Head of caudate nucleus (tissue), 42 donors: ENCODE measurements at regions of chr6 and their contacts with region 1.

Region 1: GRCh38 chr6:143007646-143008045 is 53.0 kb upstream of the AIG1 start:
- DNase-seq: no peak

Region 2: DNA sequence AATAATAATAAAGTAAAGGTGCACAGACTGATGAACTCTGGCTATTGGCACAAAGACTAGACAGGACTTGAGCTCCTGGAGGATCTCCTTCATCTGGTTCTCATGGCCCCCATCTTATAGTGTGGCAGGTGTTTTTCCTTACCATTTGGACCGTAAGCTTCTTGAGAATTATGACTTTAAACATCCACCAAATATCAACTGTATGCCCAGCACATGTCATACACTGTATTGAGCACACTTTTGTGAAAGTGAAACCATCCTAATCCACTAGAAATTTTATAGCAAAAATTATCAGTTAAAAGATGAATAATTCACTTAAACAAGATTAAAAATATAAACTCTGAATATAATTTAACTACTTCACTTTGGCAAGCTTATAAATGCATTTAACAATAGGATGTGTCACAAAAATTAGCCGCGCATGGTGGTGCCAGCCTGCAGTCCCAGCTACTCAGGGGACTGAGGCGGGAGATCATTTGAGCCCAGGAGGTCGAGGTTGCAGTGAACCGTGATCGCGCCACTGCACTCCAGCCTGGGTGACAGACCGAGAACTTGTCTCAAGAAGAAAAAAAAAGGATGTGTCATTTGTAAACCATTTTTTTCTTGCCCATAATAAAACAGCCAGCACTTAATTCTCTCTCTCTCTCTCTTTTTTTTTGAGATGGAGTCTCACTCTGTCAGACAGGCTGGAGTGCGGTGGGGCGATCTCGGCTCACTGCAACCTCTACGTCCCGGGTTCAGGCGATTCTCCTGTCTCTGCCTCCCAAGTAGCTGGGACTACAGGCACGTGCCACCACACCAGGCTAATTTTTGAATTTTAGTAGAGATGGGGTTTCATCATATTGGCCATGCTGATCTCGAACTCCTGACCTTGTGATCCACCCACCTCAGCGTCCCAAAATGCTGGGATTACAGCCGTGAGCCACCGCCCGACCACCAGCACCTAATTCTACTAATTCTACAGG is 71.8 kb before region 1 on chr6:
- intact Hi-C with region 1: no loop called
- DNase-seq: no peak

Region 3: DNA sequence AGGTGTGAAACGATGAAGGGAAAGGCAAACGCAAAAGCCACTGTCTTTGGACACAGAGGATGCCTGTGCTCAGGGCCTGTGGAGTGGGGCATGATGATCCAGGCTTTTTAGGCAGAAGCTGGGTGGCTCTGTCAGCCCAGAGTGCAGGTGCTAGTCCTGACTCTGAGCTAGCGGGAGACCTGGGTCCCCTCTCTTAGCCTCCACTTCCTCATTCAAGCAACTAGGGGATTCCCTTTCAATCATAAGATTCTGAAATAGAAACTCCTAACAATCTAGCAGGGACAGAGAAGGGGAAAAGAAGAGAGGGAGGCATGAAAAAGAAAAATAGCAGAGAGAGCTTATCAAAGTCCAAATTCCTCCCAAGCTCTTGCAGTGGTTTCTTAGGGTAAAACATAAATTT is 55.0 kb before region 1 on chr6:
- intact Hi-C with region 1: loop called (anchors 10 kb)
- DNase-seq: no peak

Region 4: GRCh38 chr6:143513410-143513809 is 505.8 kb after region 1 on chr6:
- intact Hi-C with region 1: no loop called
- DNase-seq: peak in 5 of 42 donors; percentile 19 to 54 (median 31)